ENCODE measurements at regions of chr9 and their contacts with region 1.

Region 1: GRCh38 chr9:12739014-12739652 is 35.7 kb upstream of the LURAP1L start:
- DNase-seq: no peak
- ATAC-seq: no peak
- H3K4me3 ChIP-seq: no peak overlapping the region
- H3K27ac ChIP-seq: no peak overlapping the region
- H3K4me1 ChIP-seq: no peaks in the 10 kb centered on the region
- H3K27me3 ChIP-seq: no peaks in the 10 kb centered on the region
- CTCF ChIP-seq: no peak

Region 2: GRCh38 chr9:12819436-12820185 is 80.5 kb after region 1 on chr9:
- intact Hi-C with region 1: loop called in 1 of 10 experiments (anchors 10 kb)
- DNase-seq: no peak
- ATAC-seq: no peak
- H3K4me3 ChIP-seq: no peak overlapping the region
- H3K27ac ChIP-seq: peak overlapping the region in 2 of 10 donors; percentile 2 to 56
- H3K4me1 ChIP-seq: peaks cover 0 to 25% (median 14%) of the 10 kb centered on the region in 9 donors
- H3K27me3 ChIP-seq: no peaks in the 10 kb centered on the region
- CTCF ChIP-seq: peak; percentile 15 to 48 (median 30)